ENCODE measurements at regions of chr12 and their contacts with region 1.

Region 1: GRCh38 chr12:4107436-4107878 is 166.1 kb upstream of the CCND2 start:
- DNase-seq: peak; percentile 79
- ATAC-seq: peak; percentile 92
- H3K4me3 Mint-ChIP-seq: peak overlapping the region; percentile 15
- H3K27ac Mint-ChIP-seq: peak overlapping the region; percentile 73
- H3K4me1 Mint-ChIP-seq: peaks cover 36% of the 10 kb centered on the region
- H3K27me3 Mint-ChIP-seq: peaks cover 11% of the 10 kb centered on the region

Region 2: DNA sequence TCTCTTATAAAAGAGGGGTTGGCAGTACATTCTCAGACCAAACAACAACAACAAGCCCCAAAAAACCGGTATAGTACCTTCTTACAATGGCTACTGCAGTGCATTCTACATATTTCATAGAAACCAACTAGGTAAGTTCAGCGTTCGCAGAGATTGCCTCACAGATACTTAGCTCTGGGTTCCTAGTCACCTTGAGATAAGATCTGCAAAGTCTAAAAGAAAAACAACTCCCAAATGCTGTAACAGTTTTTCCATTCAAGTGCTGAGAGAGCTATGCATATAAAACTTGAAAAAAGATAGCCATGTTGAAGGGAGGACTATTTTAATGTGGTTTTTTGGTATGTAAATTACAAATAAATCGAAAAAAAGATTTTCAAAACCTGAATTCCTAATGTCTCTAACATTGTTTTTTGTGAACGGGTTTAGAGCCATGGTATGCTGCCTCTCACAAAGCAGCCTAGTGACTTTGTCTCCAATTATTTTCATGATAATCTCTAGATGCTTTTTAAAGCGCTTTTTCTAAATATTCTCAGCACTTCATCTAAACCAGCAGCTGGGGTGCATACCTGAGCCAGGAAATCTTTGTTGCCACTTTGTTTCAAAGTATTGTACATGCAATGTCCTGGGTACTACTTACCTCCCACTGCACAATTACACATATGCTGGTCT is 298.0 kb before region 1 on chr12:
- CTCF ChIA-PET with region 1: no interaction called
- POLR2A ChIA-PET with region 1: no interaction called
- intact Hi-C with region 1: no loop called
- DNase-seq: no peak
- ATAC-seq: no peak
- H3K4me3 Mint-ChIP-seq: no peak overlapping the region
- H3K27ac Mint-ChIP-seq: no peak overlapping the region
- H3K4me1 Mint-ChIP-seq: peaks cover 24% of the 10 kb centered on the region
- H3K27me3 Mint-ChIP-seq: no peaks in the 10 kb centered on the region

Region 3: DNA sequence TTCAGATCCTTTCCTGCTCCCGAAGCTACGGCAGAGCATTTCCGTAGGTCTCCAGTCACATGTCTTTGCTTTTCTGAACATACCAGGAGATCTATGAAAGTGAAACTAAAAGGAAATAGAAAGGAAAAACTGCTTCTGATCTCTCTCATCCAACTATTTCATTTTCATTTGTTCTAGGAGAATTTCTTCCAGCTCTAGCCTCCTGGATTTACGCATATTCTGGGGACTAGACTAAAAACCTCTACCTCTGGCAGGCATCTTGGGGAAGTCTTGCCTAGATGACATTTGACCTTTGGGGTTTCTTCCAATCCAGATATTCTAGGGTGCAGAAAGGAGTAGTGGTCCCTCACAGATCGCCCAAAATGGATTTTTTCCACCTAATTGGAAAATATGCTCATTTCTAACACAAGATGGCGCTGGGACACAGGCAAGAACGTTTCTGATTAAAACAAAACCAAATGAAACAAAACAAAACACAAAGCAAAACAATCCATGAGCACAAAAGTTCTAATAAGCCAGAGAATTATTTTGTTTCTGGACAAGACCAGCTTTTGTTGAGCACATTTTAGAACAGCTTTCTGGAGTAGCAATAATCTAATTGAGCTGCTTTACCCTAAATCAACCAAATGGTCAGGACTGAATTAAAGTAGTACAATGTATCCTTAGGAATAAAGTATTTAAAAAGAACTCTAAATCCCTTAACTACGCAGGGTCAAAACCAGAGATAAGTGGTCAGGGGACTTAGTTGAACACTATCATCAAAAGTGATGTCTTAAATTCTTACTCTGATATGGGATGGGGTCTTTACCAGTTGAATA is 222.0 kb before region 1 on chr12:
- CTCF ChIA-PET with region 1: interaction called, 10 read pairs
- POLR2A ChIA-PET with region 1: no interaction called
- intact Hi-C with region 1: loop called in 1 of 2 experiments (anchors 1 kb)
- DNase-seq: peak; percentile 47
- ATAC-seq: peak; percentile 27
- H3K4me3 Mint-ChIP-seq: no peak overlapping the region
- H3K27ac Mint-ChIP-seq: peak overlapping the region; percentile 58
- H3K4me1 Mint-ChIP-seq: peaks cover 7% of the 10 kb centered on the region
- H3K27me3 Mint-ChIP-seq: no peaks in the 10 kb centered on the region

Region 4: DNA sequence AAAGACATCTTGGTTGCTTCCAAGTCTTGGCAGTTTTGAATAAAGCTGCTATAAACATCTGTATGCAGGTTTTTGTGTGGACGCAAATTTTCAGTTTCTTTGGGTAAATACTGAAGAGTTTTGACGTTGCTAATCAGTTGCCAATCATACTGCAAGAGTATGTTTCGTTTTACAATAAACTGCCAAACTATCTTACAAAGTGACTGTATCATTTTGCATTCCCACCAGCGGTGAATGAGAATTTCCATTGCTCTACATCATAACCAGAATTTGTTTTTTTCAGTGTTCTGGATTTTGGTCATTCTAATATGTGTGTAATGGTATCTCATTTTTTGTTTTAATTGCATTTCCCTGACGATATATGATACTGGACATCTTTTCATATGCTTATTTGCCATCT is 43.4 kb before region 1 on chr12:
- CTCF ChIA-PET with region 1: no interaction called
- POLR2A ChIA-PET with region 1: no interaction called
- intact Hi-C with region 1: loop called in 1 of 2 experiments (anchors 5 kb)
- DNase-seq: no peak
- ATAC-seq: peak; percentile 70
- H3K4me3 Mint-ChIP-seq: no peak overlapping the region
- H3K27ac Mint-ChIP-seq: peak overlapping the region; percentile 64
- H3K4me1 Mint-ChIP-seq: peaks cover 22% of the 10 kb centered on the region
- H3K27me3 Mint-ChIP-seq: no peaks in the 10 kb centered on the region

Region 5: GRCh38 chr12:4135919-4136605 is 28.6 kb after region 1 on chr12:
- CTCF ChIA-PET with region 1: interaction called, 4 read pairs
- POLR2A ChIA-PET with region 1: interaction called, 3 read pairs
- intact Hi-C with region 1: loop called in 1 of 2 experiments (anchors 1 kb)
- DNase-seq: peak; percentile 90
- ATAC-seq: peak; percentile 91
- H3K4me3 Mint-ChIP-seq: peak overlapping the region; percentile 37
- H3K27ac Mint-ChIP-seq: peak overlapping the region; percentile 94
- H3K4me1 Mint-ChIP-seq: peaks cover 60% of the 10 kb centered on the region
- H3K27me3 Mint-ChIP-seq: no peaks in the 10 kb centered on the region

Region 6: GRCh38 chr12:4164559-4165558 is 57.4 kb after region 1 on chr12:
- CTCF ChIA-PET with region 1: interaction called, 16 read pairs
- POLR2A ChIA-PET with region 1: no interaction called
- intact Hi-C with region 1: no loop called
- DNase-seq: peak; percentile 82
- ATAC-seq: peak; percentile 85
- H3K4me3 Mint-ChIP-seq: peak overlapping the region; percentile 75
- H3K27ac Mint-ChIP-seq: peak overlapping the region; percentile 88
- H3K4me1 Mint-ChIP-seq: peaks cover 50% of the 10 kb centered on the region
- H3K27me3 Mint-ChIP-seq: no peaks in the 10 kb centered on the region

Region 7: GRCh38 chr12:4215229-4216186 is 108.1 kb after region 1 on chr12:
- CTCF ChIA-PET with region 1: interaction called, 7 read pairs
- POLR2A ChIA-PET with region 1: interaction called, 3 read pairs
- intact Hi-C with region 1: loop called in 1 of 2 experiments (anchors 5 kb)
- DNase-seq: peak; percentile 63
- ATAC-seq: peak; percentile 91
- H3K4me3 Mint-ChIP-seq: peak overlapping the region; percentile 43
- H3K27ac Mint-ChIP-seq: peak overlapping the region; percentile 84
- H3K4me1 Mint-ChIP-seq: peaks cover 29% of the 10 kb centered on the region
- H3K27me3 Mint-ChIP-seq: no peaks in the 10 kb centered on the region

Region 8: GRCh38 chr12:4293299-4293965 is 186.0 kb after region 1 on chr12:
- CTCF ChIA-PET with region 1: interaction called, 11 read pairs
- POLR2A ChIA-PET with region 1: no interaction called
- intact Hi-C with region 1: no loop called
- DNase-seq: peak; percentile 73
- ATAC-seq: peak; percentile 82
- H3K4me3 Mint-ChIP-seq: peak overlapping the region; percentile 48
- H3K27ac Mint-ChIP-seq: peak overlapping the region; percentile 92
- H3K4me1 Mint-ChIP-seq: peaks cover 78% of the 10 kb centered on the region
- H3K27me3 Mint-ChIP-seq: no peaks in the 10 kb centered on the region

Measured in activated CD4-positive, alpha-beta T cell treated with anti-CD3 and anti-CD28 coated beads for 36 hours (primary cell).